ENCODE measurements at regions of chr15 and their contacts with region 1.

Region 1: DNA sequence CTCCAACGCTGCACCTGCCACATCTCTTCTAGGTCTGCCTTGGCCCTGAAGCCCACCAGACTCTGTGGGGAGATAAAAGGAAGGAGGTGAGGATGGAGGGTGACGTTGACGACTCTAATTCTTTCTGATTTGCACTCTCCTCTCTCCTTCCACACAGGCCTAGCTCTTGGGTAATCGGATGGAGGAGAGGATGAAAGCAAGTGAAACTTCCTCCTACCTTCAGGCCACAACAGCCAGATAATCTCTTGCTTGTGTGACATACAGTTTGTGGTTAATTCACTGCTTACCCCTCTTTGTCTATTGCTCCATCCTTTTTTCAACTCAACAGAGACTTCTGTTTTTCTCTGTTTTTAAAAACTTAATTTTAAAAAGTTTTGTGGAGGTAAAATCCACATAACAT is 208.1 kb downstream of the SV2B start:
- DNase-seq: no peak
- H3K4me3 Mint-ChIP-seq: no peak overlapping the region
- H3K27ac Mint-ChIP-seq: no peak overlapping the region
- H3K4me1 Mint-ChIP-seq: peaks cover 43% of the 10 kb centered on the region
- H3K27me3 Mint-ChIP-seq: peaks cover 42% of the 10 kb centered on the region

Region 2: DNA sequence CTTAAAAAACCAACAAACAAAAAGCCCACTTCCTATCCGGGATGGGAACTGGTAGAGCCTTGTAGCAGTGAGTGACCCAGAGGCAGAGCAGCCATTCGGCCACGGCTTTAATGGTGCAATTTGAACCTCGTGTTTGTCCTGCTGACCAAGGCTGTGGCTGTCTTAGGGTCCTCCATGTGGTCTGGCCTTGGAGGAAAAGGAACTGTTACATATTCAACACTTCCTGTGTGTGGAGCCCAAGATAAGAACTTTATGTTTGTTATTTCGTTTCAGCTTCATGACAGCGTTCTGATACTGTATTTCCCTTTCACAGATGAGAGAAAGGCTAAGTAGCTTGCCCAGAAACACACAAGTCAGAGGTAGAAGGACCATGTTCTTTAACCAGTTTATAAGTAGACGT is 61.6 kb after region 1 on chr15:
- intact Hi-C with region 1: no loop called
- DNase-seq: no peak
- H3K4me3 Mint-ChIP-seq: no peak overlapping the region
- H3K27ac Mint-ChIP-seq: no peak overlapping the region
- H3K4me1 Mint-ChIP-seq: peaks cover 5% of the 10 kb centered on the region
- H3K27me3 Mint-ChIP-seq: peaks cover 9% of the 10 kb centered on the region

Region 3: GRCh38 chr15:91706322-91707032 is 398.3 kb after region 1 on chr15:
- intact Hi-C with region 1: loop called (anchors 1 kb)
- DNase-seq: peak; percentile 84
- H3K4me3 Mint-ChIP-seq: peak overlapping the region; percentile 9
- H3K27ac Mint-ChIP-seq: peak overlapping the region; percentile 76
- H3K4me1 Mint-ChIP-seq: peaks cover 24% of the 10 kb centered on the region
- H3K27me3 Mint-ChIP-seq: peaks cover 22% of the 10 kb centered on the region

Measured in activated T-helper 1 cell treated with anti-CD3 and anti-CD28 coated beads, Interleukin-12 subunit alpha, Interleukin-12 subunit beta, Interleukin-2, Interleukin-4 antibody, amounts not matched to agents 30 ng/mL and 10 ng/mL and 1 ng/mL, durations not matched to agents 14 hours and 24 hours and 36 hours (primary cell).